ENCODE measurements at regions of chr20 and their contacts with region 1.

Region 1: DNA sequence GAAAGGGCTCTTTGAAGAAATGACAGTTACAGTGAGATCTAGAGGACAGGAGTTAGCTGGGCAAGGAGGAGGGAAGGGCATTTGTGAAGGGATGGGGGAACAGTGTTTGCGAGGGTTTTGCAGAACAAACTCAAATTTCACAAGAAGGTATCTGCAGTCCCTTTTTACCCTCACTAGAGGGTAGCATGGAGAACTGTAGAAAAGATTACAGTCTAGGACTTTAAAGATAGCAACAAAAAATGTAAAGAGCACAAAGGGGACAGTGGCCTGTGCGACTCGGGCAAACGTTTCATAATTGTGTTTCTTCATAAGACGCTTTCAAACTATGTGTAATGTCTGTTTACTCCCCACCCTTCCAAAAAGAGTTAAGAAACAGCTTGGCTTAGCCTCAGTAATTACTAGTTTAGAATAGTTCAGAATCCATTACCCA is 21.2 kb upstream of the ASXL1 start:
- DNase-seq: no peak
- H3K4me3 ChIP-seq: no peak overlapping the region
- H3K27ac ChIP-seq: no peak overlapping the region
- H3K4me1 ChIP-seq: peaks cover 0 to 17% (median 0%) of the 10 kb centered on the region in 4 donors
- H3K27me3 ChIP-seq: no peaks in the 10 kb centered on the region
- CTCF ChIP-seq: peak; percentile 48 to 67 (median 52)
- EP300 ChIP-seq: no peak
- POLR2A ChIP-seq: no peak

Region 2: DNA sequence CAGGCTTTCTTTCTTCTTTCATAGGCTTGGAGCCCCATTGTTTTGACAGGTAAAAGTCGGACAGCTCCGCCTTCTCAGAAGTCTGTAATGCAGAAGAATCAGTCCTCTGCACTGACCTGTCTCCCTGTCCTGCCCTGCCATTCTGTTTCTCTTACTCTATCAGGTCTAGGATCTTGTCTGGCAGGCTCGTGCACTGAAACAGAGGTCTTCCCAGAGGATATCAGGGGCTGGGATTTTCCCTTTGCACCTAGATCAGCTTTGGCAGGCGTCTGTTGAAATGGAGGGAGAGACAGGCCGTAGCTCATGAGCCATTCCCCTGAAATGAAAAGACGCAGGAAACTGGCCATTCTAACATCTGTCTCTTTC is 34.4 kb before region 1 on chr20:
- intact Hi-C with region 1: no loop called
- DNase-seq: no peak
- H3K4me3 ChIP-seq: no peak overlapping the region
- H3K27ac ChIP-seq: no peak overlapping the region
- H3K4me1 ChIP-seq: peaks cover 0 to 5% (median 0%) of the 10 kb centered on the region in 4 donors
- H3K27me3 ChIP-seq: no peaks in the 10 kb centered on the region
- CTCF ChIP-seq: no peak
- EP300 ChIP-seq: no peak
- POLR2A ChIP-seq: no peak

Region 3: GRCh38 chr20:32484958-32485769 is 148.2 kb after region 1 on chr20:
- intact Hi-C with region 1: loop called (anchors 5 kb)
- DNase-seq: no peak
- H3K4me3 ChIP-seq: peak overlapping the region; percentile 78 to 95 (median 92)
- H3K27ac ChIP-seq: peak overlapping the region; percentile 81 to 94 (median 89)
- H3K4me1 ChIP-seq: peaks cover 26 to 45% (median 41%) of the 10 kb centered on the region in 4 donors
- H3K27me3 ChIP-seq: no peaks in the 10 kb centered on the region
- CTCF ChIP-seq: peak; percentile 86 to 91 (median 86)
- EP300 ChIP-seq: no peak
- POLR2A ChIP-seq: no peak

Region 4: DNA sequence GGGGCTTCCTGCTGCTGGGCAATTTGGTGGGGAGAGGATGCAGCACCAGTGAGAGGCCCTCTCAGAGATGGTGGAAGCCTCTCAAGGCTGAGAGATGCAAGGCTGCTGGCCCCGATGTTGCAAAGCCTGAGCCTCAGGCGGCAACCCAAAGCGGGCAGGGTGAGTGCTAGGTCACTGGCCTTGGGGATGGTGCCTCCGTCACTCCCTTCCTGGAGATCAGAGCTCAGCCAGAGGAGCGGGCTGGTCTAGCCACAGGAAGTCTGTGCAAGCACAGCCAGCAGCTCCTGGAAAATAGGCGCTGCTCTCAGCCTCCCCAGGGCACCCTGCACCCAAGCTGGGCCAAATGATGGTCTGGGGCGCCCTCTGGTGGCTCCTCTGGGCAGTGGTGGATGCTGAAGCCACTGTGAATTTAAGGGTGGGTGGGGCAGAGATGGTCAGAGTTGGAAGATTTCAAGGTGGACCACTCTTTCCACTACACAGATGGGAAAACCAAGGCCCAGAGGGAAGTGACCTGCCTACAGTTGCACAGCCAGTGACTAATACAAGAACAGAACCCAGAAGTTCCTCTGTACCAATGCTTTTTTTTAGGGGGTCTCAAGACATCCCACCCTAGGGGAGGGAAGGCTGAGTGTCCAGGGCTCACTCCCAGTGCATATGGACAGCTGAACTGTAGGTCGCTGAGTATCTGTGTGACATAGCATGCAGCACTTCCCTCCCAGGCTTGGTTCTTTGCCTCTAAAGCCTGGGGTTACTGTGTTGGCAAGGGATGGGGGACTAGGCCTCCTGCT is 316.0 kb after region 1 on chr20:
- intact Hi-C with region 1: loop called (anchors 5 kb)
- DNase-seq: peak; percentile 95
- H3K4me3 ChIP-seq: no peak overlapping the region
- H3K27ac ChIP-seq: no peak overlapping the region
- H3K4me1 ChIP-seq: peaks cover 4 to 6% (median 5%) of the 10 kb centered on the region in 4 donors
- H3K27me3 ChIP-seq: peaks cover 0 to under 1% (median 0%) of the 10 kb centered on the region in 4 donors
- CTCF ChIP-seq: peak; percentile 95 to 96 (median 95)
- EP300 ChIP-seq: no peak
- POLR2A ChIP-seq: no peak